HCT116 (cell line): ENCODE measurements at regions of chr5 and their contacts with region 1.

Region 1: DNA sequence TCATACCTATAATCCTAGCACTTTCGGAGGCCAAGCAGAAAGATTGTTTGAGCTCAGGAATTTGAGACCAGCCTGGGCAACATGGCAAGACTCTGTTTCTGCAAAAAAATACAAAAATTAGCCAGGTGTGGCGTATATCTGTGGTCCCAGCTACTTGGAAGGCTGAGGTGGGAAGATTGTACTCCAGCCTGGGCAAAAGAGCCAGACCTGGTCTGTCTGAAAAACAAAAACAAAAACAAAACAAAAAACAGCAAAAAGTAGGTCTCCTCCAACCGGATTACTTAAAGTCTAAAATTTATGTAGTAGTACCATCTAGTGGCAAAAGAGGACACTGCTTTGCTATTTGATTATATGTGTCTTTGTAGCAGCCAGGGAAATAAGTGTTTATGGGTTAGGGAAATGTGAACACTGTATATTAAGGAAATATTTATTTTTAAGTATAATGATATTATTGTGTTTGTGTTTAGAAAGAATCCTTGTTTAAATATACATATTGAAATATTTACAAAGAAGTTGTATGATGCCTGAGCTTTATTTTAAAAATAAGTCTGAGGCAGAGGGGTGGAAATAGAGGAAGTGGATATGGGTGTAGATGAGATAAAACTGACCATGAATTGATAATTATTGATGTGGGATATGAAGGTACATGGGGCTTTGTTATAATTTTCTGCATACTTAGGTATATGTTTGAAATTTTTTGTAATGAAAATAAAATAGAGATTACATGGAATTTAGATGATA is 20.0 kb downstream of the APC start:
- DNase-seq: peak; percentile 48
- ATAC-seq: peak; percentile 83
- H3K4me3 ChIP-seq: no peak overlapping the region
- H3K27ac ChIP-seq: no peak overlapping the region
- H3K4me1 ChIP-seq: peaks cover 4 to 5% of the 10 kb centered on the region in 2 experiments
- H3K27me3 ChIP-seq: no peaks in the 10 kb centered on the region
- CTCF ChIP-seq: peak; percentile 64 to 78 (median 76)
- POLR2A ChIP-seq: no peak
- RAD21 ChIP-seq: peak; percentile 87

Region 2: DNA sequence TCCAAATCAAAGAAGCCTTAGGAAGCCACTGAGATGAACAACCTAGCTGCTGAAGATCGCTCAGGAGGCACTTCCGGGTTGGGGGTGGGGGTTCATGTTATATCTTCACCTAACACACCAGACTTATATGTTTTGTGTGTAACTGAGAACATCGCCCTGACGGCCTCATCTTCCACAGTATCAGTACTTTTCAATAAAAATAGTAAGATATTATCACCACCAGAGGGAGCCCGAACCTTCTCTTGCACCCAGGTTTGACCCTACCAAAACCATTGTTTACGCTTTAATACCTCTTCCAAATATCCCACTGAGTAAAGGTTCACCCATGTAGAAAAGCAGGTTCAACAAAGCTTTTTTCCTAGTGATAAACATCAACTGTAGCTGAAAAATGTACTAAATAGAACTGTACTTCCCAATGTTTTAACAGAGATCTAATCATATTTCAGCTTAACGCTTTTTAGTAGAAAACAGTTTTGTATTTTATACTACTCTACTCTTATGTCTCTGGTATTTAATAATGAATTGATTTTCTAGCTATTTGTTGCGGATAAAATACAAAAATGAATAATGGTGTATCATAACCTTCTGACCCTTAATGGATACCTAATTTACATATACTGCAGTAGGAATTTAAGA is 582.6 kb before region 1 on chr5:
- CTCF ChIA-PET with region 1: interaction called, 7 read pairs
- POLR2A ChIA-PET with region 1: no interaction called
- RAD21 ChIA-PET with region 1: interaction called in 1 of 2 experiments, 4 read pairs
- intact Hi-C with region 1: loop called (anchors 2 kb)
- DNase-seq: peak; percentile 61
- ATAC-seq: peak; percentile 89
- H3K4me3 ChIP-seq: peak overlapping the region in 1 of 2 experiments; percentile 22; a peak in 1 of 4 replicates
- H3K27ac ChIP-seq: no peak overlapping the region
- H3K4me1 ChIP-seq: peaks cover 2 to 3% of the 10 kb centered on the region in 2 experiments; a peak in 2 of 4 replicates
- H3K27me3 ChIP-seq: no peaks in the 10 kb centered on the region
- CTCF ChIP-seq: peak; percentile 55 to 85 (median 78)
- POLR2A ChIP-seq: no peak
- RAD21 ChIP-seq: peak; percentile 83

Region 3: DNA sequence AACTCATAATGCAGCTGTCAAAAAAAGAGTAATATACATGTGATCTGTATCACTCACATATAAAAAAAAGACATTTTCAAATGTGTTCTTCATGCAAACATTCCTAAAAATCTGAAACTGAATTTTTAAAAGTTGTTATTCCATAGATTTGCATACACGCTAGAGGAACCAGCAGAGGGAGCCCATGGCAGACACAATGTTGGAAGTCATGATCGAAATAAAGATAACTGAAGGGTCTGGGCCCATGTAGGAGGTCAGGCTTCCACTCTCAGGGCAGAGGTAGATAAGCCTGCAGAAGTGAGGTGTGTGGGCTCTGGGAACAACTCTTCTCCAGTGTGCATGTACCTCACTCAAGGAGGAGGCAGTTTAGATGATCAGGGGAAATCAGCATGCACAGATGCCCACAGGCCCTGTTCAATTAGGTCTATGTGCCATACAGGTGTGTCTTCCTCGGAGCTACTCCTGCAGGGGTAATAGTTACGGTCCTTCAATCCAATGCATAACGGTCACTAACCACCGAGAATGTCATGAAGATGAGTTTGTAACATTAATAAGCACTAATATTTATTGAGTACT is 547.1 kb before region 1 on chr5:
- CTCF ChIA-PET with region 1: no interaction called
- POLR2A ChIA-PET with region 1: no interaction called
- RAD21 ChIA-PET with region 1: no interaction called
- intact Hi-C with region 1: loop called (anchors 2 kb)
- DNase-seq: peak; percentile 16
- ATAC-seq: peak; percentile 82
- H3K4me3 ChIP-seq: no peak overlapping the region
- H3K27ac ChIP-seq: no peak overlapping the region
- H3K4me1 ChIP-seq: no peaks in the 10 kb centered on the region
- H3K27me3 ChIP-seq: no peaks in the 10 kb centered on the region
- CTCF ChIP-seq: peak; percentile 69 to 77 (median 71); a peak in 5 of 6 replicates
- POLR2A ChIP-seq: no peak
- RAD21 ChIP-seq: peak; percentile 83

Region 4: GRCh38 chr5:112779531-112779930 is 21.9 kb after region 1 on chr5:
- CTCF ChIA-PET with region 1: no interaction called
- POLR2A ChIA-PET with region 1: no interaction called
- RAD21 ChIA-PET with region 1: no interaction called
- intact Hi-C with region 1: no loop called
- DNase-seq: no peak
- ATAC-seq: no peak
- H3K4me3 ChIP-seq: no peak overlapping the region
- H3K27ac ChIP-seq: no peak overlapping the region
- H3K4me1 ChIP-seq: no peaks in the 10 kb centered on the region
- H3K27me3 ChIP-seq: no peaks in the 10 kb centered on the region
- CTCF ChIP-seq: no peak
- POLR2A ChIP-seq: no peak
- RAD21 ChIP-seq: no peak